GM12878 (cell line): ENCODE measurements at regions of chr6 and their contacts with region 1.

Region 1: DNA sequence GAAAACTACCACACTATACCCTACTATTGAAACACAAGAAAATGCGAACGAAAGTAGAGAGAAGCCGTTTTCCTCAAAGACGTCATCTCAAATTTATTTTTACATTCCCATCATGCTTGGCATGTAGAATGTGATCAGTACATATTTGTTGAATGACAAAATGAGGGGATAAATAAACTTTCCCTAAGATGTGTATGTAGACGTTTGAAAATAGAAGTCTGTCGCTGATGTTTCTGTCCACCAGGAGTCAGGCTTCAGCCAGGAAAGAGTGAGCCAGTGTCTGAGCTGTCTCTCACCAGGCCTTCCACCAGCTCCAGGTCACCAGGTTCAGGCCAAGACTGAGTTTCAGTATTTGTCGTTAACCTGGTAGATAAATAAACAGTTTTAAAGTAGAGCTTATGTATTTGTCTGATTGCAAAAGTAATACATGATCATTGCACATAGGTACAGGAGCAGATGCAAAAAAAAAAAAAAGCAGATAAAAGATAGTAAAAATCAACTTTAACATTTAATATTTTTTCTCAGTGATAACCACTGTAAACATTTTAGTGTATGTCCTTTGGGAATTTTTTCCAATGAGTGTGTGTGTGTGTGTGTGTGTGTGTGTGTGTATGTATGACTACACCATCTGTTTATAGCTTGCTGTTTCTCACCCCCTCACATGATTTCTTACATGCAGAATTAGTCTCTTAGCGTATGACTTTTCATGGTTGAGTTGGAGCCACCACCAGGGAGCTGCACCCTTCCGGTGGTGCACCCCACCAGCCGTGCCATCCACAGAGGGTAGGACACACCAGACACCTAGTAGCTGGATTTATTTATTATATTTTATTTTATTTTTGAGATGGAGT is 26.2 kb downstream of the WRNIP1 start:
- DNase-seq: peak; percentile 13
- ATAC-seq: peak; percentile 97
- H3K4me3 ChIP-seq: no peak overlapping the region
- H3K27ac ChIP-seq: no peak overlapping the region
- H3K4me1 ChIP-seq: peaks cover 7% of the 10 kb centered on the region
- H3K27me3 ChIP-seq: no peaks in the 10 kb centered on the region
- CTCF ChIP-seq: peak; percentile 64 to 81 (median 67)
- EP300 ChIP-seq: no peak
- POLR2A ChIP-seq: no peak
- RAD21 ChIP-seq: peak; percentile 73

Region 2: DNA sequence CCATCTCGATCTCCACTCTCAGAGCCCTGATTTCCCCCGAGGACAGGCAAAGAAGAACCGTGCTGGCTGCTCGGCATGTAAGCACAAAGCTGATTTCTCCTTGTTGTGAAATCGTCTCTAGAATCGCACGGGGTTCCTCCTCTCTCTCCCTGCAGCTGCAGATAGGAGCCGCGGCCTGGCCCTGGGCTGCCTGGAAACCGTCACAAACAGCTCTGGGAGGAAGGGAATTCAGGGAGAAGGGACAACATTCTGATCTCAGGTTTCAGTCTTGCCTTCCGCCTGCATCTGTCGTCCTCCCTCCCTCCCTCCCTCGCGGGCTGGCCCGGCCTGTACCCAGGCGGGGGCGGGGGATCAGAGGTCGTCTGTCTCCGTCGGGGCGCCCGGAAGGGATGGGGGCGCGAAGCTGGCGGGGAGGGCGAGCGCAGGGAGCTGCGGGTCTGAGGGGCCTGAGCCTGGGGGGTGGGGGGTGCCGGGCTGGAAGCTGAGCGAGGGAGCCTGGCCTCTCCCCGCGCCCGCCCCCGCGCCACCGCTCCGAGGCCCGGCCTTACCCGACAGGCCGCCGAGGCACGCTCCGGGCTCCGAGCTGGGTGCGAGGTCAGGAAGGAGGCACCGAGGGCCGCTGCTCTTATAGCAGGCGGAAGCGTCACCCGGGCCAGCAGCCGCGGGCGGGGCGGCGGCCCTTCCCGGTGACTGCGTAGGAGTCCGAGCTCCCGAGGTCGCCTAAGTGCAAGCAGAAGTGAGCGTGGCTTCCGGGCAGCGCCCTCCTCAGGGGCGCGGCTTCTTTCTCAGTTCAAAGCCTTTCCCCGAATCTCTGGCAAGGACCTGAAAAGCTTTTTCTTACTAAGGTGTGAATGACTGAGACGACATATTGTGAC is 50.2 kb after region 1 on chr6 and contains the start of gene SERPINB1:
- CTCF ChIA-PET with region 1: interaction called, 45 read pairs
- POLR2A ChIA-PET with region 1: interaction called, 4 read pairs
- RAD21 ChIA-PET with region 1: interaction called, 33 read pairs
- SMC1A ChIA-PET with region 1: interaction called, 44 read pairs
- in situ Hi-C with region 1: no loop called
- intact Hi-C with region 1: loop called (anchors 1 kb)
- DNase-seq: no peak
- ATAC-seq: peak; percentile 76
- H3K4me3 ChIP-seq: no peak within 1 kb of the TSS; the same call in 1 of the 2 replicates
- H3K27ac ChIP-seq: no peak within 1 kb of the TSS
- H3K4me1 ChIP-seq: peaks cover 4% of the 10 kb centered on the region; the same call in 1 of the 2 replicates
- H3K27me3 ChIP-seq: peaks cover 0 to 5% of the 10 kb centered on the region in 2 experiments; a peak in 3 of 4 replicates
- CTCF ChIP-seq: 0 out of 6 replicates have a peak, but pooled peaks of 1 of the 3 experiments have one; percentile 0
- EP300 ChIP-seq: no peak
- POLR2A ChIP-seq: peak; percentile 51; the same call in 1 of the 2 replicates
- RAD21 ChIP-seq: no peak
- polyA plus RNA-seq, gene SERPINB1: 0.82 to 1.8 TPM

Region 3: DNA sequence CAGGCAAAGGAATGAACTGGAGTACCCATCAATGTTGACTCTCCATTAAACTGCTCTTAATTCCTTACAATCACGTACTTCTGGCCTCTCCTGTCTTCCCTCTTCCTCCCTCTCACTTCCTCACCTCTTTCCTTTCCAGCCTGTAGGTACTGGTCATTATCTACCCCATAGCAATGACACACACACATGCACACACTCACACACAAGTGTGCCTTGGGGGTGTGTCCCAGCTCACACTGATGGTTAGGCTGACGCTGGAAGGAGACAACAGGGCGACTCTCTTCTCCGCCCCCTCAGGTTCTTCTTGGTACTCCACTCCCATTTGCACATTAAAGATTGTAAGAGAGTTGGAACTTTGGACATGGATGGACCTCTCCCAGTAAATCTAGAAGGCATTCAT is 125.7 kb after region 1 on chr6:
- CTCF ChIA-PET with region 1: interaction called, 28 read pairs
- POLR2A ChIA-PET with region 1: interaction called, 3 read pairs
- RAD21 ChIA-PET with region 1: interaction called, 28 read pairs
- SMC1A ChIA-PET with region 1: interaction called, 24 read pairs
- in situ Hi-C with region 1: no loop called
- intact Hi-C with region 1: loop called (anchors 5 kb)
- DNase-seq: no peak
- ATAC-seq: peak; percentile 71
- H3K4me3 ChIP-seq: no peak overlapping the region
- H3K27ac ChIP-seq: no peak overlapping the region
- H3K4me1 ChIP-seq: no peaks in the 10 kb centered on the region
- H3K27me3 ChIP-seq: peaks cover 0 to 5% of the 10 kb centered on the region in 2 experiments; a peak in 1 of 4 replicates
- CTCF ChIP-seq: 0 out of 6 replicates have a peak, but pooled peaks of 1 of the 3 experiments have one; percentile 16
- EP300 ChIP-seq: no peak
- POLR2A ChIP-seq: no peak
- RAD21 ChIP-seq: no peak

Region 4: DNA sequence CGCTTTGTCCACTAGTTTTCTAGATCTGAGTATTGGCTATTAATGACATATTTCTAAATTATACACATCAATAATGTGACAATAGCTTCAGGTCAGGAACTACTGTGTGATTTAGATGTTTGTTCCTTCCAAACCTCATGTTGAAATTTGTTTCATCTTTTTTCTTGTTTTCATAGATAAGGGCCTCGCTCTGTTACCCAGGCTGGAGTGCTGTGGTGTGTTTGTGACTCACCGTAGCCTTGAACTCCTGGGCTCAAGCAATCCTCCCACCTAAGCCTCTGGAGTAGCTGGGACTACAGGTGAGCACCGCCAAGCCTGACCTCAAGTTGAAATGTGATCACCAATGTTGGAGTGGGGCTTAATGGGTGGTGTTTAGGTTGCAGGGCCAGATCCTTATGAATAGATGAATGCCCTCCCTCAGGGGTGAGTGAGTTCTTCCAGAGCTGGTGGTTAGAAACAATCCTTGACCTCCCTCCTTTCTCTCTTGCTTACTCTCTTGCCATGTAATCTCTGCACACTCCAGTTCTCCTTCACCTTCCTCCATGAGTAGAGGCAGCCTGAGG is 202.5 kb after region 1 on chr6:
- CTCF ChIA-PET with region 1: interaction called, 23 read pairs
- POLR2A ChIA-PET with region 1: no interaction called
- RAD21 ChIA-PET with region 1: interaction called, 46 read pairs
- SMC1A ChIA-PET with region 1: interaction called, 19 read pairs
- in situ Hi-C with region 1: no loop called
- intact Hi-C with region 1: loop called (anchors 1 kb)
- DNase-seq: no peak
- ATAC-seq: no peak
- H3K4me3 ChIP-seq: no peak overlapping the region
- H3K27ac ChIP-seq: no peak overlapping the region
- H3K4me1 ChIP-seq: peaks cover 7% of the 10 kb centered on the region; the same call in 1 of the 2 replicates
- H3K27me3 ChIP-seq: no peaks in the 10 kb centered on the region; a peak in 1 of 4 replicates
- CTCF ChIP-seq: no peak
- EP300 ChIP-seq: no peak
- POLR2A ChIP-seq: no peak
- RAD21 ChIP-seq: no peak

Region 5: DNA sequence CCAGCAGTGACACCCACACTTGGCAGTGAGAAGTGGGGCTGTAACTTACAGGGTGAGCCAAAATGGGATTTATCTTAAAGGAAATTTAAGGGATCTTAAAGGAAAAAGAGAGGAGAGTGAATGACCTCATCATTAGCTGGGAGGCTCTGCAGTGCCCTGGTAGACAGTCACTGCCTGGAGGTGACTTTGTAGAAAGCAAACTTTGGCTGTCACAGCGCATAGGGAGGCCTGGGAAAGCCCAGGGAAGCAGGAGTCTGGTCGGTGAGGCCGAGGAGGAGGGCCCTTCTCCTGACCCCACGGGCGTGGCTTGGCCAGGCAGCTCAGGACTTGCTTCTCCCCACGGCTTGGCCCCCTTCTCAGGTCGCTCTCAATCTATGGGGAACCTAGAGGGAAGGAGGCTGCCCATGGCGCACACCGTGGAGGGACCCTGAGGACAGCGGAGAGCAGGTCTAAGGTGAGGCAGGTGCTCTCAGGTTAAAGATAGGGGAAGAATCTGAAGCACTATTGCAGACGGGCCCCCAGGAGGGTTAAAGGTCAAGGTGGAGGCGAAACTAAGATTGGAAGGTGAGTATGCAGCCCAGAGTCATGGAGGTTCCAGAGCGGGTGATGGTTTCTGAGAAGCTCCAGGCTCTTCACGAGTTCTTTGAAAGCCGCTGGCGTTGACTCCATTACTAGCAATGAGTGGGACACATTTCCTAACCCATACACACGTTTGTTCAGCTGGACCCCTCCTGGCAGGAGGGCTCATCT is 261.3 kb after region 1 on chr6:
- CTCF ChIA-PET with region 1: interaction called, 5 read pairs
- POLR2A ChIA-PET with region 1: interaction called, 3 read pairs
- RAD21 ChIA-PET with region 1: interaction called, 6 read pairs
- SMC1A ChIA-PET with region 1: interaction called, 3 read pairs
- in situ Hi-C with region 1: no loop called
- intact Hi-C with region 1: loop called (anchors 5 kb)
- DNase-seq: no peak
- ATAC-seq: no peak
- H3K4me3 ChIP-seq: no peak overlapping the region
- H3K27ac ChIP-seq: no peak overlapping the region
- H3K4me1 ChIP-seq: no peaks in the 10 kb centered on the region
- H3K27me3 ChIP-seq: peaks cover 2 to 3% of the 10 kb centered on the region in 2 experiments; a peak in 3 of 4 replicates
- CTCF ChIP-seq: no peak
- EP300 ChIP-seq: no peak
- POLR2A ChIP-seq: no peak
- RAD21 ChIP-seq: no peak